ENCODE measurements at regions of chr17 and their contacts with region 1.

Region 1: DNA sequence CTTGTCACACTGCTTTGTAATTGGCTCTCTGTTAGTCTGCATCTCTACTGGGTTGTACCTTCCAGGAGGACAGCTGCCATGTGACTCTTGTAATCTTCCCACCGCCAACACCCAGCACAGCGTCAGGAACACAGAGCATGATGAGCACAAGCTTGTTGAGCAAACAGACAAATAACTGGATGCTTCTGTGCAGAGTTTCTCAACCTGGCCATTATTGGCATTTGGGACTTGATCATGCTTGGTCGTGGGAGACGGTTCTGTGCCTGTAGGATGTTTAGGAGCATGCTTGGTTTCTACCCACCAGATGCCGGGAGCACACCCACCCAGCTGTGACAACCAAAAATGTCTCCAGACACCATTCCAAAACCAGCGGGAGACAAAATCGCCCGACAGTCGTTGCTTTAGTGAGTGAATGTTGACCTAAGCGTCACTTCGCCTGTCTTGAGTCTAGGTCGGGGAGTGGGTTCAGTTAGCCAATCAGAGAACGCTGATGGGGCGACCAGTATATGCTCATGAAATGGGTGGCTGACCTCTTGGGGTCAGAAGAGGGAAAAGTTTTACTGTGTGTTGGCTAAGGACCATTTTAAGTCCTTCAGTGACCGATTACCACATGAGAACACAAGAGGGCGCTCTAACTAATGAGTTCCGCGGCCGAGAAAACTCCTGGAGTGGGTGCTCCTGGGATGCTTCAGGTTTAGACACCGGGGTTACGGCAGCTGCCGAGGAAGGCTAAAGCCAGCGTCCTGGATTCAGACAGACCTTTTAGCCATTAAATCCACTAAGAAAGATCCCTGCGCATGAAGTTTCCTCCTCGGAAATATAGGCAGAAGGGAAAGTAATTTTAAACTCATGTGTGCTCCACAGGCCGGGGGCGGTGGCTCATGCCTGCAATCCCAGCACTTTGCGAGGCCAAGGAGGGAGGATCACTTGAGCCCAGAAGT is 57.8 kb upstream of the TEX2 start:
- DNase-seq: peak in 1 of 2 donors; percentile 80
- H3K4me3 ChIP-seq: peak overlapping the region in 1 of 2 donors; percentile 24
- H3K27ac ChIP-seq: no peak overlapping the region
- H3K4me1 ChIP-seq: peaks cover 0 to 6% of the 10 kb centered on the region in 2 donors
- H3K27me3 ChIP-seq: no peaks in the 10 kb centered on the region
- CTCF ChIP-seq: peak; percentile 67 to 74 (median 72)

Region 2: DNA sequence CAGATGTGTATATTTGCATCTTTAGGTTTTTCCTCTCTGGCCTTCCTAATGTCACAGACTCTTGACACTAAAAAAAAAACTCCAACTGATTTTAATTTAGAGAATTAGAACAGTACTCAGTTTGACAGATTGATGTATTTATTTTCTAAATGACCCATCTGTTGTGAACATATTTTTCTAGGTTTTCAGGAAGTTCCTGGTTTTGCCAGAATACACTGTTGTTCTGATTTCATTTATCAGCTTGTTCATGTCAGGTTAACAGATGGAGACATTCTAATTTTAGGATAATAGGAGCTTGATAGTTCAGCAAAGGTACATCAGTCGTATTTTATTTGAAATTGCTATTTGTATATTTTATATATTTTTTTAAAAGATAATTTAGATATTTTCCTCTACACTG is 1221.5 kb before region 1 on chr17:
- intact Hi-C with region 1: no loop called
- DNase-seq: no peak
- H3K4me3 ChIP-seq: no peak overlapping the region
- H3K27ac ChIP-seq: no peak overlapping the region
- H3K4me1 ChIP-seq: no peaks in the 10 kb centered on the region
- H3K27me3 ChIP-seq: no peaks in the 10 kb centered on the region
- CTCF ChIP-seq: no peak

Region 3: DNA sequence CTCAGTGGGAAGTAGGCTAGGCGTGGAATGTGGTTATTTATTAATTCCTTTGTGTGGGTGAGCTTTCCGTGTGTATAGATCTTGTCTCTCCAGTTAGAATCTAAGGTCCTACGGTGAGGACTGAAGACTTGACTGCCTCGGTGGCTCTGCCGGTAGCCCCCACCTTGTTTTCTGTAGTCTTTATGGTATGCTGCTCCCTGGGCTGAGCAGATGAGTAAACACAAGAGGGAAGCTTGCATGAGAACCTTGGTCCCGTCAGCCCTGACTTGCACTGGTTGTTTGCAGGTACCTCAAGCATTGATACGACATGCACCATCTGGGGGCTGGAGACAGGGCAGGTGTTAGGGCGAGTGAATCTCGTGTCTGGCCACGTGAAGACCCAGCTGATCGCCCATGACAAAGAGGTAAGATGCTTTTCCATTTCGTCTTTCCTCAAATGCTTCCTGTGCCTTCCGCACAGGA is 741.3 kb before region 1 on chr17:
- intact Hi-C with region 1: no loop called
- DNase-seq: no peak
- H3K4me3 ChIP-seq: no peak overlapping the region
- H3K27ac ChIP-seq: no peak overlapping the region
- H3K4me1 ChIP-seq: no peaks in the 10 kb centered on the region
- H3K27me3 ChIP-seq: no peaks in the 10 kb centered on the region
- CTCF ChIP-seq: no peak

Region 4: DNA sequence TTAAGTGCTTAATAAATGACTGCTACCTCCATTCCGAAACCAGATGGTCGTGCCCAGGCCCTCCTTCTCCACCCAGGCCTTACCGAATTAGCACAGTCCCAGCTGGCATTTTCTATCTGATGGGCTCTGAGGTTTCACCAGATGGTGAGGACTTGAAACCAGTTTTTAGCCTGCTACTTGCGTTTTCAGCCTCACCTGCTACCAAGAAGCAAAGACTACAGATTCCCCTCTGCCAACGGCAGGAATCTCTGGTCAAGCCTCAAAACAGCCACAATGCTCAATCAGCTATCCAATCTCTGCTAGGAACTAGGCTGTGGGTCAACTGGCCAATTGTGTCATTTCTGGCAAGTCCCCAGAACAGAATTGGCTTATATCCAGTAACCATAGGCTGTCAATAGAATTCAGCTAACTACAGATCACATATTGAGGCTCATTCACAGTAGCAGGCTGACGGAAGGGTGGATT is 58.0 kb after region 1 on chr17:
- intact Hi-C with region 1: no loop called
- DNase-seq: no peak
- H3K4me3 ChIP-seq: no peak overlapping the region
- H3K27ac ChIP-seq: no peak overlapping the region
- H3K4me1 ChIP-seq: no peaks in the 10 kb centered on the region
- H3K27me3 ChIP-seq: no peaks in the 10 kb centered on the region
- CTCF ChIP-seq: no peak

Region 5: DNA sequence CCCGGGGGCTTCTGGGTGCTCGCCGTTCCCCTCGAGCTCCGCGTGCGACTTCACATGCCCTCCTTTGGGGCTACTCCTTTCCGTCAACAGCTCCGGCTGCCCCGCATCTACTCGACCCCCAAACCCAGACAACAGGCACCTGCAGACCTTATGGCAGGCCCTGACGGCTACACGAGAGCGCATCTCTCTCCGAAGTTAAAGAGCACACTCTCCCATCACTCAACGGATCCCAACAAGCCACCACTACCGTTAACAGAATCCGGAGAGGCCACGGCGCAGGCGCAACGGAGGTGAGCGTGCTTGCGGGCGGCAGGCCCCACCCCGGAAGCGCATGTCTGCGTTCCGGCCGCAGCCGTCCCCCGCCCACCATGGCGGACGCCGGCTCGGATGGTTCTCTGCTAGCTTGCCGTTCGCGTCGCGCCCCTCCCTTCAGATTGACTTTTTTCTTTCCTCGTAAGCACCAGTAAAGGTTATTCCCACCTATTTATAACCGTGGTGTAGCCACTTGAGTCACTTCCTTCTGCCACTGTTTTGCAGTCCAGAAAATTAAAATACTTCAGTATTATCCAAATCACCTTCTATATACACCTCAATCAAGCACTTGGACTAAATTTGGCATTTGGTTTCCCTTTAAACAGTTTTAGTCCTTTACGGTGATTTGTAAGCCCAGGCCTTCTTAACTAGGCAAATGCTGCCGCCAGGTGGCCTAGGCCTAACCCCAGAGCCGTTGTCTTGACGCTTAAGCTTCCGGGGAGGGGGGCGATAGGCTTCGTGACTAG is 176.1 kb after region 1 on chr17 and contains the start of gene POLG2:
- intact Hi-C with region 1: loop called (anchors 10 kb)
- DNase-seq: peak; percentile 47 to 96
- H3K4me3 ChIP-seq: peak within 1 kb of the TSS; percentile 81 to 95
- H3K27ac ChIP-seq: peak within 1 kb of the TSS; percentile 82 to 85
- H3K4me1 ChIP-seq: peaks cover 12 to 39% of the 10 kb centered on the region in 2 donors
- H3K27me3 ChIP-seq: no peaks in the 10 kb centered on the region
- CTCF ChIP-seq: peak; percentile 33 to 45 (median 37)
- total RNA-seq, gene POLG2: 1.5 TPM